CD4-positive, alpha-beta T cell (primary cell): ENCODE measurements at regions of chr6 and their contacts with region 1.

Region 1: DNA sequence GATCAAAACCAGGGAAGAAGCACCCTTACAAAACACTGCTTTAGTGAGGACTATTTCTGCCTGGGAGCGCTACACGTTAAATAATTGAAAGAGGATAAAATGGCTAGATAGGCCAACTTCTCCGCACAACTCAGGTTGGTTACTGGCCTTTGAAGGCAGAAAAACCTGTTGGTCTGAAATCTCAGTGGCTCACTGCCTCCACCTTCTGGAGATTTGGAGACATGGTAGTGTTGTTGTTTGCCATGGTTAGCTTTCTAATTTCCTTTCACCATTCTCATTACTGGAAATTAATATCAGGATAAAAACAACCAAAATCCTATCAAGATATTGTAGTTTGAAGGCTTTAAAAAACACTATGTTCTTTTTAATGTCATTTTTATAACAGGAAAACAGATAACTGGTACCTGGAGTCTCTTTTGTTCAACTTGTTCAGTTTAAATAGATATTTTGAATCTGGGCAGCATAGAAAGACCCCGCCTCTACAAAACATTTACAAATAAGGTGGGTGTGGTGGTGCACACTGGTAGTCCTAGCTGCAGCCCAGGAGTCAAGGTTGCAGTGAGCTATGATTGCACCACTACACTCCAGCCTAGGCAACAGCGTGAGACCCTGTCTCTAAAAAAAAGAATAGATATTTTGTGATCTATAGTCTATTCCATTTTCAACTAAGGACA is 27.5 kb upstream of the BCLAF1 start:
- DNase-seq: peak; percentile 33 to 87 (median 50)
- ATAC-seq: peak; percentile 99
- H3K4me3 ChIP-seq: no peak overlapping the region
- H3K4me3 Mint-ChIP-seq: no peak overlapping the region
- H3K27ac ChIP-seq: no peak overlapping the region
- H3K27ac Mint-ChIP-seq: no peak overlapping the region
- H3K4me1 ChIP-seq: no peaks in the 10 kb centered on the region
- H3K4me1 Mint-ChIP-seq: no peaks in the 10 kb centered on the region
- H3K27me3 ChIP-seq: no peaks in the 10 kb centered on the region
- H3K27me3 Mint-ChIP-seq: no peaks in the 10 kb centered on the region
- CTCF ChIP-seq: peak; percentile 83

Region 2: DNA sequence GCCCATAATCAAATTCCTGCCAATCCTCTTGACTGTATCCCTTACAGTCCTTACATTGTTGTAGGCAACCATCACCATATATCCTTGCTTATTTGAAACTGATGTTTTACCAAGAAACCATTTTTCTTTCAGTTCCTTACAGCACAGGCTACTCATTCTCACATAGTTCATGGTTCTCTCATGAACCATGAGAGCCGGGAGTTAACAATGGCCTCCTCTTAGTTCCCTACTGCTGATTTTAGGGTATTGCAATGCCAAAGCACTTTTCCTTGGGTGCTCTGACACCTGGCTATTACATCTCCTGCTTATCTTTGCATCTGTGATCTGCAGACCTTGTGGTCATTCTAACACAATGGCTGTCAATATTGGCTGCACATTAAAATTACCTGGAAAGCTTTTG is 1002.6 kb before region 1 on chr6:
- CTCF ChIA-PET with region 1: no interaction called
- POLR2A ChIA-PET with region 1: no interaction called
- intact Hi-C with region 1: no loop called
- DNase-seq: no peak
- ATAC-seq: no peak
- H3K4me3 ChIP-seq: no peak overlapping the region
- H3K4me3 Mint-ChIP-seq: no peak overlapping the region
- H3K27ac ChIP-seq: no peak overlapping the region
- H3K27ac Mint-ChIP-seq: no peak overlapping the region
- H3K4me1 ChIP-seq: no peaks in the 10 kb centered on the region
- H3K4me1 Mint-ChIP-seq: no peaks in the 10 kb centered on the region
- H3K27me3 ChIP-seq: no peaks in the 10 kb centered on the region
- H3K27me3 Mint-ChIP-seq: no peaks in the 10 kb centered on the region
- CTCF ChIP-seq: no peak

Region 3: DNA sequence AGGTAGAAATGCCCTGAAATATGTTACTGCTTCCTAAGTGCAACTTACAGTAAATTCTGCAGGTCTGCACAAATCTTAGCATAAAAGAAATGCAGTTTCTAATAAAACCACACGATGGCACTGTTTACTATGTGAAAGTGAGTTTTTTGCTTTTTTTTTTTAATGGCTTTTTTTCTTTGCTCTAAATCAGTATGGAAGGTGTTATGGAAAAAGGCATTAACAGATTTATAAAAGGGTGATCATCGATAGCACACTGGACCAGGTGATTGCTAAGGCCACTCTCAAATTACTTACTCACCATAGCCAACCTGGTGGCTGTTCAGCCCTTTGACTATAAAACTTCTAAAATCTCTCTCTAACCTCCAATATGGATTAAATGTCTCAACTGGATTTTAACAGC is 865.5 kb before region 1 on chr6:
- CTCF ChIA-PET with region 1: interaction called, 3 read pairs
- POLR2A ChIA-PET with region 1: no interaction called
- intact Hi-C with region 1: loop called (anchors 2 kb)
- DNase-seq: peak in 3 of 14 experiments; percentile 42 to 66 (median 64)
- ATAC-seq: peak; percentile 54
- H3K4me3 ChIP-seq: no peak overlapping the region
- H3K4me3 Mint-ChIP-seq: no peak overlapping the region
- H3K27ac ChIP-seq: no peak overlapping the region
- H3K27ac Mint-ChIP-seq: no peak overlapping the region
- H3K4me1 ChIP-seq: no peaks in the 10 kb centered on the region
- H3K4me1 Mint-ChIP-seq: no peaks in the 10 kb centered on the region
- H3K27me3 ChIP-seq: no peaks in the 10 kb centered on the region
- H3K27me3 Mint-ChIP-seq: no peaks in the 10 kb centered on the region
- CTCF ChIP-seq: peak; percentile 86

Region 4: DNA sequence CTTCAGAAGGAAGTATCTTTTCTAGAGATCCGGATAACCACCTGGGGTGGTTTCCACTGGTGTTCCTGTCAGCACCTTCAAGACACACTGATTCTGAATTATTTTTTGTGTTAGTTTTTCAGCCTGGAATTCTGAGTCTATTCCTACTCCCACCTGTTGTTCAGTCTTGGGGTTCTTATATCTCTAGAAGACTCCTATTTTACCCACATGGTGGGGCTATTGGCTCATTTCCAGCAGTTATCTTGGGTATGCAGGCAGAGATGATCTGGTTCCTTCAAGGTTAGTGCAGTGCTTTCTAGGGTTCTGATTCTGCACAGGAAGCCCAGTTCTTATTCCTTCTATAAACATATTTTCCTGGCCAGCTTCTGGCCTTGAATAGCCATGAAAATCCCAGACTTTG is 641.3 kb before region 1 on chr6:
- CTCF ChIA-PET with region 1: no interaction called
- POLR2A ChIA-PET with region 1: no interaction called
- intact Hi-C with region 1: loop called (anchors 2 to 5 kb)
- DNase-seq: peak in 12 of 14 experiments; percentile 6 to 77 (median 23)
- ATAC-seq: peak; percentile 89
- H3K4me3 ChIP-seq: no peak overlapping the region
- H3K4me3 Mint-ChIP-seq: no peak overlapping the region
- H3K27ac ChIP-seq: no peak overlapping the region
- H3K27ac Mint-ChIP-seq: no peak overlapping the region
- H3K4me1 ChIP-seq: no peaks in the 10 kb centered on the region
- H3K4me1 Mint-ChIP-seq: no peaks in the 10 kb centered on the region
- H3K27me3 ChIP-seq: no peaks in the 10 kb centered on the region
- H3K27me3 Mint-ChIP-seq: no peaks in the 10 kb centered on the region
- CTCF ChIP-seq: peak; percentile 81

Region 5: DNA sequence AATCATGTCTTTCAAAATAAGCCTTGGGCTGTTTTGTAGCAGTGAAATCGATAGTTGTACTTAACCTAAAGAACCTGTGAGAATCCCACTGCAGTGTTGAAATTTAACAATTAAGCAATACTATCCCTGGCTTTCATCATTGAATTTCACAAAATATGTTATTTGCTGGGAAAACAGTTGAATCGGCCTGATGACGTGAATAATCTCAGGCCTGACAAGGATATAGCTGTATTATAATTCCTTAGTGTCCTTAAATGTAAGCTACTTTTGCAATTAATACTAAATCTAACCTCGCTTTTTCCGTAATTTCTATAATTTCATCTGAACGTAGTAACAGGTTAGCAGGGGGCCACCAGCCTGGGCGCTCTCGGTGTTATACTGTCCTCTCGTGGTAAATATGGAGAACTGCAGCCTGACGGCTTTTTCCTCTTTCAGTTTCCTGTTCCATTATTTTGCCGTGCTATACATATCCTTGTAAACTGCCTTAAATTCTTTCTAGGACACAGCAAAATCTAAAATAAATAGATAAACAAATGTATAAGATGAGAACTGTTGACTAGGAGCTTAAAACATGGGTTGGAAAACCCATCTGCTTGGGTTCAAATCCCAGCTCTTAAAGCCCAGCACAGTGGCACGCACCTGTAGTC is 91.0 kb before region 1 on chr6:
- CTCF ChIA-PET with region 1: interaction called, 12 read pairs
- POLR2A ChIA-PET with region 1: no interaction called
- intact Hi-C with region 1: loop called in 1 of 2 experiments (anchors 2 kb)
- DNase-seq: peak; percentile 32 to 78 (median 44)
- ATAC-seq: peak; percentile 91
- H3K4me3 ChIP-seq: peak overlapping the region; percentile 10
- H3K4me3 Mint-ChIP-seq: peak overlapping the region; percentile 59
- H3K27ac ChIP-seq: no peak overlapping the region
- H3K27ac Mint-ChIP-seq: no peak overlapping the region
- H3K4me1 ChIP-seq: peaks cover 7% of the 10 kb centered on the region
- H3K4me1 Mint-ChIP-seq: peaks cover 12% of the 10 kb centered on the region
- H3K27me3 ChIP-seq: no peaks in the 10 kb centered on the region
- H3K27me3 Mint-ChIP-seq: no peaks in the 10 kb centered on the region
- CTCF ChIP-seq: peak; percentile 100

Region 6: GRCh38 chr6:136262940-136263339 is 54.2 kb before region 1 on chr6:
- CTCF ChIA-PET with region 1: interaction called, 4 read pairs
- POLR2A ChIA-PET with region 1: no interaction called
- intact Hi-C with region 1: loop called in 1 of 2 experiments (anchors 5 kb)
- DNase-seq: no peak
- ATAC-seq: no peak
- H3K4me3 ChIP-seq: no peak overlapping the region
- H3K4me3 Mint-ChIP-seq: no peak overlapping the region
- H3K27ac ChIP-seq: no peak overlapping the region
- H3K27ac Mint-ChIP-seq: peak overlapping the region; percentile 2
- H3K4me1 ChIP-seq: no peaks in the 10 kb centered on the region
- H3K4me1 Mint-ChIP-seq: peaks cover 33% of the 10 kb centered on the region
- H3K27me3 ChIP-seq: no peaks in the 10 kb centered on the region
- H3K27me3 Mint-ChIP-seq: no peaks in the 10 kb centered on the region
- CTCF ChIP-seq: no peak

Region 7: DNA sequence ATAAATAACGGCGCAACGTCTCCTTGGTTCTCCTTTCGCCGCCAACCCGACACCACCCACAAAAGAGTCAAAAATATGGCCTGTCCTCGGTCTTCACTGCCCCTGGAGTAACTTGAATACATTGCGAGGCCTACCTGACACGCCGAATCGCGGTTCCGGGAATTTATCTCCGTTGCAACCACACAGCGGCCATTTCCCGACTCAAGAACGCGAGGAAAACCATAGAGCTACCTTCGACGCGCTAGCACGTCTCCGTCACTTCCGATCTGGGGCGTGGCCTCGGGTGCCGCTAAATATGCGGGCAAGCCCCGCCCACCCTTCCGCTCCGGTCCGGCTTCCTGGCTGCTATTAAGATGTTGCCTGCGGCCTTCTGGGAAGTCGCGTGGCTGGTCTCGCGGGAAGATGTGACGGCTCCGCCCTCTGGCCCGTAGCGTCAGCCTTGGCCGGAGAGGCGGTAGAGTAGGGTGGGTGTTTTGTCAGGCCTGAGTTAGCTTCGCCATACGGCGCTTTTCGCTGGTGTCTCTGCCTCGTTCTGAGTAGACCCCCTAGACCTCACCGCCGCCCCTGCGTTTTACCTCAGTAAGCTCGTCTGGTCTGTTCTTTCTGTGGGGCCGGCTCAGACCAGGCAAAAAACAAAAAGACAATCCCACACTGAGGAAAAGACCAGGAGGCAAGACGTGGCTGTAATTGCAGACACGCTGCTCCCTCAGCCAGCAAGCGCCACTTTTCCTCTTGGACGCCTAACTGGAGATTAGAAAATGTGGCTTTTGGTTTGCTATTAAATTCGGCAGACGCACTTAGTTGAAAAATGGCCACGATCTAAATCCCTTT is 27.4 kb before region 1 on chr6 and contains the start of gene BCLAF1:
- CTCF ChIA-PET with region 1: interaction called, 26 read pairs
- POLR2A ChIA-PET with region 1: interaction called, 36 read pairs
- intact Hi-C with region 1: loop called (anchors 1 to 2 kb)
- DNase-seq: peak; percentile 99 to 100 (median 99)
- ATAC-seq: peak; percentile 70
- H3K4me3 ChIP-seq: peak within 1 kb of the TSS; percentile 88
- H3K4me3 Mint-ChIP-seq: peak within 1 kb of the TSS; percentile 97
- H3K27ac ChIP-seq: peak within 1 kb of the TSS; percentile 100
- H3K27ac Mint-ChIP-seq: peak within 1 kb of the TSS; percentile 99
- H3K4me1 ChIP-seq: peaks cover 52% of the 10 kb centered on the region
- H3K4me1 Mint-ChIP-seq: peaks cover 47% of the 10 kb centered on the region
- H3K27me3 ChIP-seq: no peaks in the 10 kb centered on the region
- H3K27me3 Mint-ChIP-seq: peaks cover 3% of the 10 kb centered on the region
- CTCF ChIP-seq: peak; percentile 7
- total RNA-seq, gene BCLAF1: 484 to 501 TPM

Region 8: DNA sequence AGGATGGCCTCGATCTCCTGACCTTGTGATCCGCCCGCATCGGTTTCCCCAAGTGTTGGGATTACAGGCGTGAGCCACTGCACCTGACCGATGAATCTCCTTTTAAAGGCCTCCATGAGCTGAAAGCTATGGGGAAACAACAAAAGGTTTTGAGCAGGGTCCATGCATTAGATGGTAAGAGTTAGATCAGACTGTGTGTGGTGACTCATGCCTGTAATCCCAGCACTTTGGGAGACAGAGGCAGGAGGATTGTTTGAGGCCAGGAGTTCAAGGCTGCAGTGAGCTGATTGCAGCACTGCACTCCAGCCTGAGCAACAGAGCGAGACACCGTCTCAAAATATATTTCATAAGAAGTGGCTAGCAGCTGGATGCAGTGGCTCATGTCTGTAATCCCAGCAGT is 13.5 kb after region 1 on chr6:
- CTCF ChIA-PET with region 1: no interaction called
- POLR2A ChIA-PET with region 1: no interaction called
- intact Hi-C with region 1: no loop called
- DNase-seq: no peak
- ATAC-seq: no peak
- H3K4me3 ChIP-seq: no peak overlapping the region
- H3K4me3 Mint-ChIP-seq: no peak overlapping the region
- H3K27ac ChIP-seq: no peak overlapping the region
- H3K27ac Mint-ChIP-seq: no peak overlapping the region
- H3K4me1 ChIP-seq: no peaks in the 10 kb centered on the region
- H3K4me1 Mint-ChIP-seq: no peaks in the 10 kb centered on the region
- H3K27me3 ChIP-seq: peaks cover 0 to 3% of the 10 kb centered on the region in 2 experiments
- H3K27me3 Mint-ChIP-seq: no peaks in the 10 kb centered on the region
- CTCF ChIP-seq: no peak